ENCODE measurements at regions of chr3 and their contacts with region 1.

Region 1: GRCh38 chr3:50674349-50675178 is at the start of gene DOCK3:
- DNase-seq: peak in 1 of 2 experiments; percentile 65
- H3K4me3 ChIP-seq: peak within 1 kb of the TSS; percentile 76
- H3K27ac ChIP-seq: peak within 1 kb of the TSS; percentile 24; the same call in 1 of the 2 replicates
- H3K4me1 ChIP-seq: peaks cover 25% of the 10 kb centered on the region
- H3K27me3 ChIP-seq: no peaks in the 10 kb centered on the region
- CTCF ChIP-seq: no peak
- total RNA-seq, gene DOCK3: 15.2 and 16.9 TPM in 2 replicates

Region 2: GRCh38 chr3:50627407-50628051 is 47.0 kb before region 1 on chr3:
- CTCF ChIA-PET with region 1: no interaction called
- POLR2A ChIA-PET with region 1: no interaction called
- intact Hi-C with region 1: loop called (anchors 2 kb)
- DNase-seq: peak; percentile 83 to 96
- H3K4me3 ChIP-seq: peak overlapping the region; percentile 19; the same call in 1 of the 2 replicates
- H3K27ac ChIP-seq: peak overlapping the region; percentile 73
- H3K4me1 ChIP-seq: peaks cover 83% of the 10 kb centered on the region
- H3K27me3 ChIP-seq: no peaks in the 10 kb centered on the region
- CTCF ChIP-seq: peak; percentile 64

Region 3: DNA sequence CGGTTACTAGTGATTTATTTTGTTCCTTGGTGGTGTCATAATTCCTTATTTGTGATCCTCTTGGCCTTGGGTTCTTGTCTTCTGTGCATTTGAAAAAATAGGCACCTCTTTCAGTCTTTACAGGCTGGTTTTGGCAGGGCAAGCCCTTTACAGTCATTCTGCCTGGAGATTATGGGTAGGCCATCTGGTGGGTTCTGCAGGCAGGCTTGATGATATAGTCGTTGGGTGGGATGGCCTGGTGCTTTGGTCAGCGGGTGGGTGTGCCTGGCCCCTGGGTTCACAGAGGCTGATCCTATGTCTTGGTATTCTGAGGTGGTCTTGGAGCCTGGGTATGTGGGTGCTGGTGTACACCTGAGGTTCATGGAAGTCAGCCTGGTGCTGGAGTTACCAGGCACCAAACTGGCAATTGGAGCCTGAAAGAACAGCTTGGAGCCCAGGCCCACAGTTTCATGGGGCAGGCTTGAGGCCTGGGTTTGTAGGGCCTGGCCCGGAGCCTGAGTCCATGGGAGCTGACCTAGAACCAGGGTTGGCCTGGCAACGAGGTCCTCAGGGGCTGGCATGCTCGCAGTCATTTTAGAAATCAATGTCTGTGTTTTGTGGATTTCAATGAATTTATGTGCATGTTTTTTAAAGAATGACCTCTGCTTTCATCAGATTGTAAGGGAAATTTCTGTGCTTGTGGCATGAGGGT is 63.5 kb after region 1 on chr3:
- CTCF ChIA-PET with region 1: no interaction called
- POLR2A ChIA-PET with region 1: no interaction called
- intact Hi-C with region 1: no loop called
- DNase-seq: no peak
- H3K4me3 ChIP-seq: no peak overlapping the region
- H3K27ac ChIP-seq: no peak overlapping the region
- H3K4me1 ChIP-seq: no peaks in the 10 kb centered on the region
- H3K27me3 ChIP-seq: no peaks in the 10 kb centered on the region
- CTCF ChIP-seq: no peak

Region 4: GRCh38 chr3:50807266-50807665 is 132.7 kb after region 1 on chr3:
- CTCF ChIA-PET with region 1: interaction called, 7 read pairs
- POLR2A ChIA-PET with region 1: interaction called, 15 read pairs
- intact Hi-C with region 1: loop called (anchors 2 kb)
- DNase-seq: peak; percentile 82 to 86
- H3K4me3 ChIP-seq: peak overlapping the region; percentile 37; the same call in 1 of the 2 replicates
- H3K27ac ChIP-seq: peak overlapping the region; percentile 96
- H3K4me1 ChIP-seq: peaks cover 44% of the 10 kb centered on the region
- H3K27me3 ChIP-seq: no peaks in the 10 kb centered on the region
- CTCF ChIP-seq: no peak

Region 5: GRCh38 chr3:50913260-50913659 is 238.7 kb after region 1 on chr3:
- CTCF ChIA-PET with region 1: no interaction called
- POLR2A ChIA-PET with region 1: no interaction called
- intact Hi-C with region 1: loop called (anchors 5 kb)
- DNase-seq: peak; percentile 35 to 65
- H3K4me3 ChIP-seq: no peak overlapping the region
- H3K27ac ChIP-seq: no peak overlapping the region
- H3K4me1 ChIP-seq: peaks cover 11% of the 10 kb centered on the region; the same call in 1 of the 2 replicates
- H3K27me3 ChIP-seq: no peaks in the 10 kb centered on the region
- CTCF ChIP-seq: no peak

Region 6: DNA sequence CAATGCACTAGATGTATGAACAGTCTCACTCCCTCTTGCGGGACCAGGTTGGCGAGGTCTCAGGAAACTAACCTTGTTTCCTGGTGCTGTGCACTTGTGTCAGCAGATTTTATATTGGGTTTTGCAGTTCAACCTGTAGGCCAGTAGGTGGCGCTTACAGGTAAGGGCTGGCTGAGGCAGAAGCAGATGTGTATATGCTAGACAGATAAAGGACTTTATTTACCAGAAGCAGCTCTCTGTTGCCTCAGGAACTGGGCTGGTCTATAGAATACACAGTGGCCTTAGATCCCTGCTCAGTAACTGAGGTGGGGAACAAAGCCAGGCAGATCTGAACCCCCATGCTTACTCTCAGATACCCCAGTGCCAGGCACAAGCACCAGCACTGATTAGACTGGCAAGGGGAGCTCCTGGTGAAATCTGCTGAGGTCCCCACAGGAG is 296.9 kb after region 1 on chr3:
- CTCF ChIA-PET with region 1: interaction called, 4 read pairs
- POLR2A ChIA-PET with region 1: no interaction called
- intact Hi-C with region 1: loop called (anchors 2 kb)
- DNase-seq: peak; percentile 56 to 68
- H3K4me3 ChIP-seq: no peak overlapping the region
- H3K27ac ChIP-seq: no peak overlapping the region
- H3K4me1 ChIP-seq: no peaks in the 10 kb centered on the region; the same call in 1 of the 2 replicates
- H3K27me3 ChIP-seq: no peaks in the 10 kb centered on the region
- CTCF ChIP-seq: peak; percentile 89

Region 7: DNA sequence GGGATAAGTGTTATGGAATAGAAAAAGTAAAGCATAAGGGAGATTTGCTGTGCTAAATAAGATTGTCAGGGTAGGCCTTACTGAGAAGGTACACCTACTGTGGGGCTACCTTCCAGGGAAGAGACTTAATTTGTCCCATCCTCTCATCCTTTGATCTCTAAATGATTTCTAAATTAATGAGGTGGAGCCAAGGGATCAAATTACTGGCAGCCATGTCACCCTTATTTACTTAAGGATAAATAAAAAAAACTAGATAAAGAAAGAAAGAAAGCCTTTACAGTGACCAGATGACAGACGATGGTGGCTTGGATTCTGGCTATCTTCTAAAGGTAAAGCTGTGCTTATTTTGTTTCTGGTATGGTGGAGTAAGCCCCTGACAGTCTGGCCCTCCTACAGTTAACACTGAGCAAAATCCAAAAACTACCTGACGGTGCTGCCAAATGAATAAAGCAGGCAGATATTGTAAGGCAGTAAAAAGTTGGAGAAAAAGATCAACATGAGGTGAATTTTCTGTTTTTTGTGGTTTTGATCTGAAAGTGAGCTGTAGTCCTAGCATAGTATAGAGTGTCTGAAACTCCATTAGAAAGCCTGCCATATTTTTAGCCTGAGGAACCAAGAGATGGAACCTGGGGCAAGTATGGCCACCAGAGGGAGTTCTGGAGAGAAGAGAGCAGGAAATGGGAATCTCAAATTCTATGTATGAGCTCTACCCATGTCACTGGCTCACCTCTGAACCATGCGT is 425.4 kb after region 1 on chr3:
- CTCF ChIA-PET with region 1: no interaction called
- POLR2A ChIA-PET with region 1: no interaction called
- intact Hi-C with region 1: loop called (anchors 5 kb)
- DNase-seq: peak in 1 of 2 experiments; percentile 38
- H3K4me3 ChIP-seq: no peak overlapping the region
- H3K27ac ChIP-seq: no peak overlapping the region
- H3K4me1 ChIP-seq: no peaks in the 10 kb centered on the region
- H3K27me3 ChIP-seq: no peaks in the 10 kb centered on the region
- CTCF ChIP-seq: peak; percentile 69

Region 8: DNA sequence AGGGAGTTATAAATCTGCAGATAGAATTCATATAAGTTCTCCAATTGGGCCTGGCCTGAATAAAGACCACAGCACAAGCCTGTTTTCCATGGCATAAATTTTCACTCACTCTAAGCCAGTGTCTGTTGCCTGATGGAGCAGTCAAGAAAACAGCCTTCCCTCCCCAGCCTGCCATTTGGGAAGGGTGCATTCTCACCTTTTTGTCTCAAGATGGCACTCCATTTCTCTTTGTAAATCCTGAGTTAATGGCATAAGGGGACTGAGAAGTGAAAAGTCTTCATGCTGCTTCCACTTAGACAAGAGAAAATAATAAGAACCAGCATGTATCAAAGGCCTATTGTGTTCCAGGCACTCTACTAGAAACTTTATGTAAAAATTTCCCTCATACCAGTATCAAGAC is 594.9 kb after region 1 on chr3:
- CTCF ChIA-PET with region 1: no interaction called
- POLR2A ChIA-PET with region 1: no interaction called
- intact Hi-C with region 1: no loop called
- DNase-seq: no peak
- H3K4me3 ChIP-seq: no peak overlapping the region
- H3K27ac ChIP-seq: no peak overlapping the region
- H3K4me1 ChIP-seq: no peaks in the 10 kb centered on the region
- H3K27me3 ChIP-seq: no peaks in the 10 kb centered on the region
- CTCF ChIP-seq: no peak

Region 9: DNA sequence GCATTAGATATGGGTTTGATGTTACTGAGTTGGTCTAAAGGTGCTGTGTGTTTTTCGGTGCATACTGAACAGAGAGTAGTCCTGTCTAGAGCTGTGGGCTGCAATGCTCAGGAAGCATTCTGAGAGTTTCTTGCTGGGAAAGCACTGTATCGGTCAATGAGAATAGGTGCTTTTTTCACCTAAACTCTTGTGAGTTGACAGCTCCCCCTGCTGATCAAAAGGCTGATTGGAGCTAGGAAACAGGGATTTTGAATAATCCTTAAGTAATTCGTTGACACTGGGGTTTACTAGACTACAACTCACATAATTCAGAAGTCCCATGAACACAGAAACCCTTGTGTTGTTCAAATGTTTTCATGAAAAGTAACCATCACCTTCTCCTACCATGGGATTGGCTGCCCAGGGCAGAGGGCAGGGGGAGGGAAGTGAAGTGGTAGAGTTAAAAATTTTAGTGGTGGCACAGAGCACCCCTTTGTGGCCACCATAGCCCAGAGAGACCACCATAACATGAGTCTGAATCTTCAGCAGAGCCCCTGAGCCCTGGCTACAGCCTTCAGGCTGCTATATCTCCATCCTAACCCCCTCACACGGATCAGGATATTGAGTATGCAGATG is 697.5 kb after region 1 on chr3:
- CTCF ChIA-PET with region 1: no interaction called
- POLR2A ChIA-PET with region 1: no interaction called
- intact Hi-C with region 1: loop called (anchors 1 kb)
- DNase-seq: peak; percentile 37 to 50
- H3K4me3 ChIP-seq: no peak overlapping the region
- H3K27ac ChIP-seq: no peak overlapping the region
- H3K4me1 ChIP-seq: no peaks in the 10 kb centered on the region
- H3K27me3 ChIP-seq: no peaks in the 10 kb centered on the region
- CTCF ChIP-seq: peak; percentile 82

Measured in PC-9 (cell line).